K562 (cell line): ENCODE measurements at regions of chr18 and their contacts with region 1.

Region 1: GRCh38 chr18:12287684-12288402 is 20.2 kb upstream of the TUBB6 start:
- DNase-seq: peak; percentile 66 to 85 (median 80)
- ATAC-seq: peak; percentile 82
- H3K4me3 ChIP-seq: peak overlapping the region; percentile 33
- H3K27ac ChIP-seq: no peak overlapping the region
- H3K4me1 ChIP-seq: peaks cover 16 to 21% of the 10 kb centered on the region in 2 experiments; a peak in 4 of 5 replicates
- H3K27me3 ChIP-seq: no peaks in the 10 kb centered on the region
- CTCF ChIP-seq: no peak
- EP300 ChIP-seq: no peak
- POLR2A ChIP-seq: no peak
- RAD21 ChIP-seq: no peak

Region 2: DNA sequence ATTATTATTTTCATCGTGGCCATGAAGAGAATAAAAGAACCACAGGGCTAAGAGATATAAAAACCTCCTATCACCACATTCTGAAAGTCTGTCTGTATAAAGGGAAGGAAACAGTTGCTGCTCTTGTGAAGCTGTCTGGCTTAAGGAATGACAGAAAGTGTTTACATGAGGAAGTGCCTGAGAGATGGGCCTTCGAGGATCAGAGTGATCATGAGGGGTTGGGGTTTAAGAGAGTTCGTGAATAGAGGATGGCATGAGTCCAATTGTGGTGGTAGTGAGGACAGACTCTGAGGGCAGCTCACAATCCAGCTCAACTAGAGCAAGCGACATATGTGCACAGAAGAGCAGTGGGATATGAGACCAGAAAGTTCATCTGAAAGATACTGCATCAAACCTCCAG is 1072.6 kb before region 1 on chr18:
- CTCF ChIA-PET with region 1: no interaction called
- POLR2A ChIA-PET with region 1: no interaction called
- in situ Hi-C with region 1: no loop called
- intact Hi-C with region 1: no loop called
- DNase-seq: no peak
- ATAC-seq: no peak
- H3K4me3 ChIP-seq: no peak overlapping the region
- H3K27ac ChIP-seq: no peak overlapping the region
- H3K4me1 ChIP-seq: no peaks in the 10 kb centered on the region
- H3K27me3 ChIP-seq: no peaks in the 10 kb centered on the region
- CTCF ChIP-seq: no peak
- EP300 ChIP-seq: no peak
- POLR2A ChIP-seq: no peak
- RAD21 ChIP-seq: no peak

Region 3: DNA sequence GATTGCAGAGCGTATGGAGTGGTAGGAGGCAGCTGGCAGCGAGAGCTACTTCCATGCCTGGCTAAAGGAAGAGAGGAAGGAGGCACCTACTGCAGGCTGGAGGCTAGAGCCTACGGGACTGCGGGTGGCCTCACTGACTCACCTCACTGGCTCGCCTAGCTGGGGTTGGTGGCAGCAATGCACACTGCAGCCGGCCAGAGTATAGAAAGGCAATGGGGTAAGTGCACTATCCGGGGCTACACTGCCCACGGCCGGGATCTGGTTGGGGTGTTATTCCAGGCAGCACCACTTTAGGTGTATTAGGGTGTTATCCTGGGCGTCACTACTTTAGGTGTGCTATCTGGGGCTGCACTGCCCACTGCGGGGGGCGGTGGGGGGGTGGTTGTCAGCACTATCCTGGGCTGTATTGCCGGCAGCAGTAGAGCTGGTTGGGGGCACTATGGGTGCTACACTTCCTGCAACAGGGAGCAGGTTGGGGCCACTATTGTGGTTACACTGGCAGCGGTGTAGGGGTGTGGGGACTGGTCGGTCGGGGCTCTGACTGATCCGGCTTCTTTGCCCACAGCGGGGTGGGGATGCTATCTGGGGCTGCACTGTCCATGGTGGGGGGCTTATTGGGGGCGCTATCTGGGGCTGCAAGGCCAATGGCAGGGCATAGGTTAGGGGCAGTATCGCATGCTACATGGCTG is 227.5 kb before region 1 on chr18:
- CTCF ChIA-PET with region 1: no interaction called
- POLR2A ChIA-PET with region 1: no interaction called
- in situ Hi-C with region 1: no loop called
- intact Hi-C with region 1: no loop called
- DNase-seq: no peak
- ATAC-seq: peak; percentile 68
- H3K4me3 ChIP-seq: no peak overlapping the region
- H3K27ac ChIP-seq: no peak overlapping the region
- H3K4me1 ChIP-seq: peaks cover 0 to 20% of the 10 kb centered on the region in 2 experiments; a peak in 2 of 5 replicates
- H3K27me3 ChIP-seq: peaks cover 14 to 55% of the 10 kb centered on the region in 2 experiments; a peak in 4 of 5 replicates
- CTCF ChIP-seq: 0 out of 6 replicates have a peak, but pooled peaks of 1 of the 3 experiments have one; percentile 11
- EP300 ChIP-seq: no peak
- POLR2A ChIP-seq: no peak
- RAD21 ChIP-seq: no peak

Region 4: GRCh38 chr18:12302391-12303147 is 14.7 kb after region 1 on chr18:
- CTCF ChIA-PET with region 1: no interaction called
- POLR2A ChIA-PET with region 1: interaction called, 6 read pairs
- in situ Hi-C with region 1: no loop called
- intact Hi-C with region 1: loop called (anchors 2 kb)
- DNase-seq: peak; percentile 83 to 92 (median 85)
- ATAC-seq: peak; percentile 78
- H3K4me3 ChIP-seq: no peak overlapping the region
- H3K27ac ChIP-seq: peak overlapping the region; percentile 84
- H3K4me1 ChIP-seq: peaks cover 54 to 59% of the 10 kb centered on the region in 2 experiments
- H3K27me3 ChIP-seq: no peaks in the 10 kb centered on the region
- CTCF ChIP-seq: no peak
- EP300 ChIP-seq: peak; percentile 82
- POLR2A ChIP-seq: no peak
- RAD21 ChIP-seq: no peak

Region 5: GRCh38 chr18:12327510-12328178 is 39.8 kb after region 1 on chr18:
- CTCF ChIA-PET with region 1: no interaction called
- POLR2A ChIA-PET with region 1: interaction called, 5 read pairs
- in situ Hi-C with region 1: no loop called
- intact Hi-C with region 1: loop called (anchors 5 kb)
- DNase-seq: peak; percentile 65 to 88 (median 74)
- ATAC-seq: peak; percentile 96
- H3K4me3 ChIP-seq: no peak overlapping the region
- H3K27ac ChIP-seq: no peak overlapping the region; the same call in 2 of the 3 replicates
- H3K4me1 ChIP-seq: peaks cover 0 to 7% of the 10 kb centered on the region in 2 experiments; a peak in 3 of 5 replicates
- H3K27me3 ChIP-seq: no peaks in the 10 kb centered on the region
- CTCF ChIP-seq: peak; percentile 86 to 94 (median 92)
- EP300 ChIP-seq: no peak
- POLR2A ChIP-seq: peak; percentile 43; the same call in 1 of the 2 replicates
- RAD21 ChIP-seq: peak; percentile 29 to 75

Region 6: GRCh38 chr18:12376718-12377555 is 89.1 kb after region 1 on chr18 and contains the start of gene AFG3L2:
- CTCF ChIA-PET with region 1: no interaction called
- POLR2A ChIA-PET with region 1: interaction called, 4 read pairs
- in situ Hi-C with region 1: no loop called
- intact Hi-C with region 1: loop called (anchors 5 kb)
- DNase-seq: peak; percentile 97 to 99 (median 98)
- ATAC-seq: peak; percentile 89
- H3K4me3 ChIP-seq: peak within 1 kb of the TSS; percentile 81
- H3K27ac ChIP-seq: peak within 1 kb of the TSS; percentile 100
- H3K4me1 ChIP-seq: peaks cover 28 to 33% of the 10 kb centered on the region in 2 experiments
- H3K27me3 ChIP-seq: no peaks in the 10 kb centered on the region
- CTCF ChIP-seq: no peak; a peak in 1 of 6 replicates
- EP300 ChIP-seq: no peak
- POLR2A ChIP-seq: peak; percentile 62
- RAD21 ChIP-seq: no peak
- polyA plus RNA-seq, gene AFG3L2: 24.1 to 25.6 TPM

Region 7: DNA sequence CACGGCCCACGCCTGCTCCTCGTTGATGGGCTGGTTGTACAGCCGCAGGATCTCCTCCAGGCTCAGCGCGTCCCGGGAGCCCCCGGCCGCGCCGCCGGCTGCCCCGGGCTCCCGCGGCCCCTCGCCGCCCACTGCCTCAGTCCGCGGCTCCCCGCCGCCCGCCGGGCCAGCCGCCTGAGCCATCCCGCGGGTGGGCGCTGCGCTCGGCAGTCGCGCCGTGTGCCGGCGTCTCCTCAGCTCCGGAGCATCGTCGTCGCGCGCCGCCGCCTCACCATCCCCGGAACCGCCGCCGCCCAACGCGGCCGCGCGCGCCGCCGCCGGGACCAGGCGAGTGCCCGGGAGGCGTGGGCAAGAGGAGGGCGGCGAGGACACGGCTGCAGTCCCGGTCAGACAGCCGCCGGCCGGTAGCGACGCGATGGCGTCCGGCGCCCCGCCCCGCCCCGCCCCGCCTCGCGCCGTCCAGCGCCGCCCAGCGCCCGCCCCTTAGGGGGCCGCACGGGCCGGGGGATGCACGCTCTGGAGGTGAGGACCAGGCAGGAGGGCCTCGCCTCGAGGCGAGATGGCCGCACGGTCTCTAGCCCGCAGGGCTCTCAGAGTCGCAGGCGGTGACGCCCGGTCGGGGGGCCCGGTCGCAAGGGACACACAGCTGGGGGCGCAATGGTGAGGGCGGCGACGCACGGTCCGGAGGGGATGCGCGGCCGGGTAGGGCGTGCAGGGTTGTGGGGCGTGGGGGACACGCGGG is 370.0 kb after region 1 on chr18 and contains the start of gene SPIRE1:
- CTCF ChIA-PET with region 1: interaction called, 3 read pairs
- POLR2A ChIA-PET with region 1: no interaction called
- in situ Hi-C with region 1: loop called (anchors 5 kb)
- intact Hi-C with region 1: loop called (anchors 1 kb)
- DNase-seq: peak; percentile 67 to 83 (median 78)
- ATAC-seq: peak; percentile 79
- H3K4me3 ChIP-seq: peak within 1 kb of the TSS; percentile 60
- H3K27ac ChIP-seq: peak within 1 kb of the TSS; percentile 80
- H3K4me1 ChIP-seq: peaks cover 11 to 16% of the 10 kb centered on the region in 2 experiments; a peak in 4 of 5 replicates
- H3K27me3 ChIP-seq: no peaks in the 10 kb centered on the region
- CTCF ChIP-seq: no peak
- EP300 ChIP-seq: no peak
- POLR2A ChIP-seq: no peak
- RAD21 ChIP-seq: no peak
- polyA plus RNA-seq, gene SPIRE1: 2.9 to 3.3 TPM